Stomach (tissue), 19 donors: ENCODE measurements at regions of chr1 and their contacts with region 1.

Region 1: GRCh38 chr1:92822879-92823278 is 9.0 kb upstream of the RPL5 start:
- DNase-seq: no peak
- H3K4me3 ChIP-seq: no peak overlapping the region
- H3K27ac ChIP-seq: no peak overlapping the region
- H3K4me1 ChIP-seq: peaks cover 0 to 18% (median 2%) of the 10 kb centered on the region in 4 donors
- H3K27me3 ChIP-seq: no peaks in the 10 kb centered on the region
- CTCF ChIP-seq: no peak
- EP300 ChIP-seq: no peak
- POLR2A ChIP-seq: no peak

Region 2: DNA sequence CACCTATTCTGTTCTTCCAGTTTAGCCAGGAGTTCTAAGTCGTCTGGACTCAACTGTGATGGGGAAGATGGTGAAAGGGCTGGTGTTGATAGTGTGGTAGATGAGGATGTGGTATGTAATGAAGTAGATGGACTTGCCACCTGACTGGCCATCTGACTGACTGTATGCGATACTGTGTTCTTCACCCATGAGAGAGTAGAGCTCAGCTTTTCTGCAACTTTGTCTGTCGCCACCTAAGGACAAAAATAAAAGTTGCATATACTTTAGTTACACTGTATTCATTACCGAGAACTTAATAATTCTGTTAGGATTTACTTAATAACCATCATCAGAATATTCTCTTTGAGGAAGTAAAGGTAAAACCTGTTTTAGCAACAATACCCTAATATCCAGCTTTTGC is 86.5 kb before region 1 on chr1:
- intact Hi-C with region 1: no loop called
- DNase-seq: peak in 1 of 2 donors; percentile 18
- H3K4me3 ChIP-seq: no peak overlapping the region
- H3K27ac ChIP-seq: no peak overlapping the region
- H3K4me1 ChIP-seq: peaks cover 0 to 15% (median 7%) of the 10 kb centered on the region in 4 donors
- H3K27me3 ChIP-seq: no peaks in the 10 kb centered on the region
- CTCF ChIP-seq: no peak
- EP300 ChIP-seq: no peak
- POLR2A ChIP-seq: no peak

Region 3: DNA sequence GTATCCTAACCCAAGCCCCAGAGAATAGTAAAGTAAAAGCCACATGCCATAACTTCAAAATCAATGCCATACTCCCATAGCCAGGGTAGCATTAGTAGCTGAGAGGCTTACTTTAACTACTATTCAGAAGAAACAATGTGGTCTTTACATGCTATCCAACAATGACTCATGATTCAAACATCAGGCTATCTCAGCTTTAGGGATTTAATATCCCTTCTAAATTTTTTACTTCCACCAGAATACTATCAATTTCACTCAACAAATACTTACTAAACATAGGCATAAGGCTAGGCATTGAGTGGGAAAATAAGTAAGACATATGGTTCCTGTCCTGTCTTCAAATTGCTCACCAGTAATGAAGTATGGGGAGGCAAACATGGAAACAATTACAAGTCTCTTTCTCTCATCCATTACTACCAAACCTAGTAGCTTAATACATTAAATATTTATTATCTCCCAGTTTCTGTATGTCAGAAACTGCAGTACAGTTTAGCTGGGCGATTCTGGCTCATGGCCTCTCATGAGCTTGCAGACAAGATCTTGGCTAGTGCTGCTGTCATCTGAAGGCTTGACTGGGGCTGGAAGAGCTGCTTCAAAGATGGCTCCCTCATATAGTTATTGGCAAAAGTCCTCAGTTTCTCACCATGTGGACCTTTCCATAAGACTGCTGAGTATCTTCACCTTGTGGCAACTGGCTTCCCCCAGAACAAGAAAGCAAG is 68.7 kb before region 1 on chr1:
- intact Hi-C with region 1: loop called (anchors 10 kb)
- DNase-seq: no peak
- H3K4me3 ChIP-seq: no peak overlapping the region
- H3K27ac ChIP-seq: no peak overlapping the region
- H3K4me1 ChIP-seq: peaks cover 0 to 23% (median 12%) of the 10 kb centered on the region in 4 donors
- H3K27me3 ChIP-seq: no peaks in the 10 kb centered on the region
- CTCF ChIP-seq: no peak
- EP300 ChIP-seq: no peak
- POLR2A ChIP-seq: no peak